ENCODE measurements at regions of chr5 and their contacts with region 1.

Region 1: DNA sequence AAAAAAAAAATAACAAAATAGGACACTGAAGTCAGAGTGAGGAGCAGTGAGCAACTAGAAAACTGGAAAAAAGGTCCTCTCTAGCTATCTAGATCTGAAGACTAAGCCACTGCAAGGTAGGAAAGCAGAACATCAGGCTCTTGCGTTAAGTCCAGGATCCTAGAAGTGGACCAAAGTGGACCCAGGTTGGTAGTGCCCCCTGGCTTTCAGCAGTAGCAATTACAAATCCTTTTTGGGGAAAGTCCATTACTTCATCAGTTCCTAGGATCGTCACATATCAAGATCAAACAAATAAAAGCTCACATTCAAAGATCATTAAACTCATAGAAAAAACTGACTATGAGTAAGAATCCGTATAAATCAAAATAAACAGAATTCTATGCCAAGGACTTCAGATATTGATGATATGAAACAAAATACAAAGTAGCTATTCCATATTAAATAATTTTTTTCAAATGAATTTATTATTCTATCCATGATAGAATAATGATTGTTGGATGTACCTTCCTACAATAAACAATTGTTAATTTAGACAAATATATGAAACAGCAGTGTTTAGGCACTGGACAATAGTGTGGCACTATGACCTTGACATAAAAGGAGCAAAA is 6.5 kb upstream of the RICTOR start:
- DNase-seq: no peak
- H3K4me3 Mint-ChIP-seq: no peak overlapping the region
- H3K27ac Mint-ChIP-seq: no peak overlapping the region
- H3K4me1 Mint-ChIP-seq: peaks cover 30% of the 10 kb centered on the region
- H3K27me3 Mint-ChIP-seq: peaks cover 20% of the 10 kb centered on the region

Region 2: GRCh38 chr5:39005566-39006232 is 75.0 kb before region 1 on chr5:
- intact Hi-C with region 1: loop called (anchors 1 kb)
- DNase-seq: no peak
- H3K4me3 Mint-ChIP-seq: no peak overlapping the region
- H3K27ac Mint-ChIP-seq: no peak overlapping the region
- H3K4me1 Mint-ChIP-seq: peaks cover 22% of the 10 kb centered on the region
- H3K27me3 Mint-ChIP-seq: no peaks in the 10 kb centered on the region

Measured in activated T-helper 1 cell treated with anti-CD3 and anti-CD28 coated beads, Interleukin-12 subunit alpha, Interleukin-12 subunit beta, Interleukin-2, Interleukin-4 antibody, amounts not matched to agents 30 ng/mL and 10 ng/mL and 1 ng/mL, durations not matched to agents 14 hours and 24 hours and 36 hours (primary cell).